T-cell (primary cell): ENCODE measurements at regions of chr5 and their contacts with region 1.

Region 1: DNA sequence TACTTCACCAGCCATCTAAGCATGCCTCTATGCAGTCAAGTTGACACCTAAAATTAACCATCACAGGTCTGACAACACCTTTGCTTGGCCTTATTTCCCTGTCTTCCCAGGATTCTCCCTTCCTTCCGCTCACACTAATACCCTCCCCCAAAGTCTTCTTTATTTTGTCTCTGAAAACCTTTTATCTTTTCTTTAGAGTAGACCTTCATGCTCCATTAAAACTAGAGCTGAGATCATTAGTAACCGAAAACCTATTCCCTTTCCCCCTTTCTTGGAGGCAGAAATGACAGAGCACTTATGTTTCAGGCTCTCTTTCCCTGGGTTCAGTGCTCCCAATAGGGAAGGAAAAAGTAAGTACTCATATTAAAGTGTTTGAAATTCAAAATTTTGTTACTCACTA is 423.8 kb downstream of the YTHDC2 start:
- DNase-seq: no peak
- ATAC-seq: no peak
- H3K4me3 ChIP-seq: no peak overlapping the region
- H3K4me3 Mint-ChIP-seq: no peak overlapping the region
- H3K27ac ChIP-seq: no peak overlapping the region
- H3K27ac Mint-ChIP-seq: no peak overlapping the region
- H3K4me1 ChIP-seq: no peaks in the 10 kb centered on the region
- H3K4me1 Mint-ChIP-seq: no peaks in the 10 kb centered on the region
- H3K27me3 ChIP-seq: no peaks in the 10 kb centered on the region
- H3K27me3 Mint-ChIP-seq: no peaks in the 10 kb centered on the region

Region 2: DNA sequence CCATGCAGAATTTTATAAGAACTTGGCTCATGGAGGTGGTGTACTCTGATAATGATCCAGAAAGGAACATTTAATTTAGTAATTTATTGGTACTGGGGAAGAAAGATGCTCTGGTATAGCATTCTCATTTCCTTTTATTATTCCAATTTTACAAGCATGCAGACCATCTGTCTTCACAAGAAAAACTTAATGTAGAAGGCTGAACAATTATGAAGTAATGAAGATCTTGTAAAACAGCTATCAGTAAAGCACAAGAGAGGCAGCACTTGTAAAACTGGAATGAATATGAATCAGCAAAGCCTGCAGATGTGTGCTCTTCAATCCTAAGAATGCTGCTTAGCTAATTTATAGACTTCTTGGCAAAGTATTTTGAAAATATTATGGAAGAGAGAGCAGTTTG is 123.8 kb before region 1 on chr5:
- CTCF ChIA-PET with region 1: interaction called in 1 of 2 experiments, 11 read pairs
- POLR2A ChIA-PET with region 1: no interaction called
- DNase-seq: no peak
- ATAC-seq: no peak
- H3K4me3 ChIP-seq: no peak overlapping the region
- H3K4me3 Mint-ChIP-seq: no peak overlapping the region
- H3K27ac ChIP-seq: no peak overlapping the region
- H3K27ac Mint-ChIP-seq: no peak overlapping the region
- H3K4me1 ChIP-seq: no peaks in the 10 kb centered on the region
- H3K4me1 Mint-ChIP-seq: no peaks in the 10 kb centered on the region
- H3K27me3 ChIP-seq: no peaks in the 10 kb centered on the region
- H3K27me3 Mint-ChIP-seq: peaks cover 1 to 3% of the 10 kb centered on the region in 2 donors

Region 3: DNA sequence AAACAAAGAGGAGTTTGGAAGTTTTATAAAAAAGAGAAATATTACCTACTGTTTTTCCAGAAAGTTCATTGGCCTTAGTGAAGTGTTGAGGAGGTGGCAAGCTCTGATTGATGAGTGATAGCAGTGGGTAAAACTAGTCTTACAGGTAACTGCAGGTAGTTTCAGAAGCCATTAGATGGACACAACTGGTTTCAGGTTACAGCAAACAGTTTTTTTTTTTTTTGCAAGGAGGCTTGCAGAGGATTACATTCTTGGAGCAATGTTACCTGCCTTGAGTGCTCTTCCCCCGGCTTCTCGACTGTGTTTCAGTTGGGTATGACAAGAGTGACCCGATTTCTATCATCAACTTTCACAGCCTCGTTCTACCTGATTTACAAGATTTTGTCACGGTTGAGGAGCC is 90.4 kb before region 1 on chr5:
- CTCF ChIA-PET with region 1: no interaction called
- POLR2A ChIA-PET with region 1: no interaction called
- DNase-seq: no peak
- ATAC-seq: no peak
- H3K4me3 ChIP-seq: no peak overlapping the region
- H3K4me3 Mint-ChIP-seq: no peak overlapping the region
- H3K27ac ChIP-seq: no peak overlapping the region
- H3K27ac Mint-ChIP-seq: no peak overlapping the region
- H3K4me1 ChIP-seq: no peaks in the 10 kb centered on the region
- H3K4me1 Mint-ChIP-seq: no peaks in the 10 kb centered on the region
- H3K27me3 ChIP-seq: no peaks in the 10 kb centered on the region
- H3K27me3 Mint-ChIP-seq: no peaks in the 10 kb centered on the region

Region 4: DNA sequence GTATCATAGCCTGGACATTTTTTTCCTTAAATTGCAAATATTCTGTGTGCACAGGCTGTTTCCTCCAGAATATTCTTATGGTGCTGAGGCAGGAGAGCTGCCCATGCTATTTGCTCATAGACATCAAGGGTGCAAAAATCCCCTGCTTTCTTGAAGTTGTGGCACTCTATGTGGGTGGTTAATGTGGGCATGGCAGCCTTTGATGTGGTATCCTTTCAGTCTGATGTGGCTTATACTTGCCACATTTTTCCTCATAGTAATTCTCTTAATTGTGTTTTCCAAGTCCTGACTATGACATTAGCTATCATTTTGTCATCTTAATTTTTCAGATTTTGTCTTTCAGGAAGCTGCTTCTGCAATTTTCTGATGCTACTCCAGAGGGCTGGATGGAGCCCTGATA is 70.5 kb before region 1 on chr5:
- CTCF ChIA-PET with region 1: no interaction called
- POLR2A ChIA-PET with region 1: no interaction called
- DNase-seq: no peak
- ATAC-seq: no peak
- H3K4me3 ChIP-seq: no peak overlapping the region
- H3K4me3 Mint-ChIP-seq: no peak overlapping the region
- H3K27ac ChIP-seq: no peak overlapping the region
- H3K27ac Mint-ChIP-seq: no peak overlapping the region
- H3K4me1 ChIP-seq: no peaks in the 10 kb centered on the region
- H3K4me1 Mint-ChIP-seq: no peaks in the 10 kb centered on the region
- H3K27me3 ChIP-seq: no peaks in the 10 kb centered on the region
- H3K27me3 Mint-ChIP-seq: no peaks in the 10 kb centered on the region

Region 5: DNA sequence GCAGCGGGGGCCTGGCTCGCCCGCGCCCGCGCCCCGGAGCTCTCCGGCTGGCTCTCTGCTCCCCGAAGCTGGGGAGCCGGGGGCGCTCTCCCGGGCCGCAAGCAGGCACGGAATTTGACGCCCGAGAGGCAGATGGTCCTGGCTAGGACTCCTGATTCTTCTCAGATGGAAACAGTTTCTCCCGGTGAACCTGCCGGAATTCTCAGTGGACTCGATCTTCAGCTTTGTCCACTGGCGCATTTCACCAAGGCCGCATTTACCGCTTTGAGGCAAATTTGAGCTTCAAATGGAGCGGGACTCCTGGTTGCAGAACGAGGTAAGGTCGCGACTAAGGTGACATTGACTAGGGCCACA is 118.9 kb after region 1 on chr5:
- CTCF ChIA-PET with region 1: no interaction called
- POLR2A ChIA-PET with region 1: no interaction called
- DNase-seq: no peak
- ATAC-seq: no peak
- H3K4me3 ChIP-seq: no peak overlapping the region
- H3K4me3 Mint-ChIP-seq: no peak overlapping the region
- H3K27ac ChIP-seq: no peak overlapping the region
- H3K27ac Mint-ChIP-seq: no peak overlapping the region
- H3K4me1 ChIP-seq: no peaks in the 10 kb centered on the region
- H3K4me1 Mint-ChIP-seq: no peaks in the 10 kb centered on the region
- H3K27me3 ChIP-seq: peaks cover 13 to 15% of the 10 kb centered on the region in 2 experiments
- H3K27me3 Mint-ChIP-seq: peaks cover 41% of the 10 kb centered on the region in 2 donors